ENCODE measurements at regions of chr17 and their contacts with region 1.

Region 1: GRCh38 chr17:50841949-50842354 is 6.6 kb downstream of the WFIKKN2 start:
- DNase-seq: peak; percentile 67 to 76 (median 75)
- ATAC-seq: peak; percentile 81 to 92 (median 90)
- H3K4me3 ChIP-seq: no peak overlapping the region
- H3K27ac ChIP-seq: no peak overlapping the region
- H3K4me1 ChIP-seq: no peaks in the 10 kb centered on the region
- H3K27me3 ChIP-seq: no peaks in the 10 kb centered on the region
- CTCF ChIP-seq: peak; percentile 74 to 87 (median 80)
- POLR2A ChIP-seq: no peak

Region 2: GRCh38 chr17:50564916-50565315 is 277.0 kb before region 1 on chr17:
- intact Hi-C with region 1: no loop called
- DNase-seq: no peak
- ATAC-seq: no peak
- H3K4me3 ChIP-seq: no peak overlapping the region
- H3K27ac ChIP-seq: no peak overlapping the region
- H3K4me1 ChIP-seq: peaks cover 0 to 16% (median 3%) of the 10 kb centered on the region in 4 donors
- H3K27me3 ChIP-seq: peaks cover 4 to 18% of the 10 kb centered on the region in 2 donors
- CTCF ChIP-seq: no peak
- POLR2A ChIP-seq: no peak

Region 3: GRCh38 chr17:50783193-50783660 is 58.7 kb before region 1 on chr17:
- intact Hi-C with region 1: loop called (anchors 5 kb)
- DNase-seq: peak; percentile 83 to 88 (median 87)
- ATAC-seq: peak; percentile 90 to 94 (median 94)
- H3K4me3 ChIP-seq: no peak overlapping the region
- H3K27ac ChIP-seq: no peak overlapping the region
- H3K4me1 ChIP-seq: peaks cover 0 to 16% (median 2%) of the 10 kb centered on the region in 4 donors
- H3K27me3 ChIP-seq: no peaks in the 10 kb centered on the region
- CTCF ChIP-seq: peak; percentile 95 to 100 (median 98)
- POLR2A ChIP-seq: no peak

Region 4: DNA sequence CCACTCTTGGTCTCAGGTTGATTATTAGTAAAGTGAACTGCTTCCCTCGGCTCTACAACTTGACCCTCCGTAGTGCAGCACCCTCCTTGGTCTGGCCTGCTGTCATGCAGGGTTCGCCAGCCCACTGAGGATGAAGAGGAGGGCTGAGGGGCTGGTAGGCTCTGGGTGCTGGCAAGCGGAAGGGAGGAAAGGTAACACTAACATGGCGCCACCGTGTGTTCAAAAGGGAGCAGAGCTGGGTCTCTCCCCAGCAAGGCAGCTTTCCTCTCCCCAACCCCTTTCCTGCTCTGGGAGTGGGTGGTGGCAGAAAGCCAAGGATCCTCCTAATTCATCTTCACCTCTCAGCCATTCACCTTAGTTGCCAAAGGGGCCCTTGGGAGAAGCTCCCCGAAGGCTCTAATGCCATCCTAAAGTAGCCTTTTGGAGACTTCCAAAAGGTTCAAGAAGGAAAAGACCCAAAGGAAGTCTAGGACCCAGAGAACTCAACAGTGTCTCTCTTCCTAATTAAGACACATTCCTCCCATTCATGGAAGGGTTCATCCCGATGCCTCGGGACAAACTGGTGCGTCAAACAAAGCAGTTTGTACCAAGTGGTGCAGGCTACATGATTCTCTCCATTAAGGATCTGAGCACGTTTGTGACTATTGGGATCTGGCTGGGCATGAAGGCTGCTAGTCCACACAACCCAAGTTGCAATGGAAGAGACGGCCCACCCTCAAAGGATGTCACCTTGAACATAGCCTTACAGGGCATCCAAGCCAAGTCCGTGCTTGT is 115.0 kb after region 1 on chr17:
- intact Hi-C with region 1: loop called in 1 of 2 experiments (anchors 5 kb)
- DNase-seq: peak; percentile 60 to 71 (median 71)
- ATAC-seq: peak; percentile 70 to 81 (median 74)
- H3K4me3 ChIP-seq: no peak overlapping the region
- H3K27ac ChIP-seq: no peak overlapping the region
- H3K4me1 ChIP-seq: peaks cover 0 to 7% (median 0%) of the 10 kb centered on the region in 4 donors
- H3K27me3 ChIP-seq: no peaks in the 10 kb centered on the region
- CTCF ChIP-seq: peak; percentile 48 to 74 (median 60)
- POLR2A ChIP-seq: no peak

Measured in right lobe of liver (tissue), 6 donors.